ENCODE measurements at regions of chr6 and their contacts with region 1.

Region 1: GRCh38 chr6:107114213-107114905 is 956 bp downstream of the BEND3 start:
- DNase-seq: peak; percentile 69
- H3K4me3 Mint-ChIP-seq: peak overlapping the region; percentile 79
- H3K27ac Mint-ChIP-seq: peak overlapping the region; percentile 77
- H3K4me1 Mint-ChIP-seq: peaks cover 21% of the 10 kb centered on the region
- H3K27me3 Mint-ChIP-seq: peaks cover 5% of the 10 kb centered on the region

Region 2: DNA sequence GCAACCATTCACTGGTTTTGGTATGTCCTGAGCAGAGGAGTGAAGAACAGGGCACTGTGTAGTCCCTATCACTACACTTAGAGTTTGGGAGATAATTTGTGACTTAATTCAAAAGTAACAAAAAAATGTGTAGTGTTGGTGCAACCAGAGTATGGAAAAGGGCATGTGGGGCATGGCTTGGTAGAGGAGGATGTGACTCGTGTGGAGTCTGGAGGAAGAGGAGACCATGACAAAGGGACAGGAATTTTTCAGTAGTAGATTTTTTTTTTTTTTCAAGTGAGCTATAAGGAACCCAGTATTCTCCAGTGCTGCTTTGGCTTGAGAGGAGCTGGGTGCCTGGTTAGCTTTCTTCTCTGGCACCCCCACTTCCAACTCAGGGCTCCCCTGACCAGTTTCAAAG is 81.2 kb before region 1 on chr6:
- intact Hi-C with region 1: loop called (anchors 1 kb)
- DNase-seq: no peak
- H3K4me3 Mint-ChIP-seq: no peak overlapping the region
- H3K27ac Mint-ChIP-seq: peak overlapping the region; percentile 81
- H3K4me1 Mint-ChIP-seq: peaks cover 32% of the 10 kb centered on the region
- H3K27me3 Mint-ChIP-seq: no peaks in the 10 kb centered on the region

Region 3: DNA sequence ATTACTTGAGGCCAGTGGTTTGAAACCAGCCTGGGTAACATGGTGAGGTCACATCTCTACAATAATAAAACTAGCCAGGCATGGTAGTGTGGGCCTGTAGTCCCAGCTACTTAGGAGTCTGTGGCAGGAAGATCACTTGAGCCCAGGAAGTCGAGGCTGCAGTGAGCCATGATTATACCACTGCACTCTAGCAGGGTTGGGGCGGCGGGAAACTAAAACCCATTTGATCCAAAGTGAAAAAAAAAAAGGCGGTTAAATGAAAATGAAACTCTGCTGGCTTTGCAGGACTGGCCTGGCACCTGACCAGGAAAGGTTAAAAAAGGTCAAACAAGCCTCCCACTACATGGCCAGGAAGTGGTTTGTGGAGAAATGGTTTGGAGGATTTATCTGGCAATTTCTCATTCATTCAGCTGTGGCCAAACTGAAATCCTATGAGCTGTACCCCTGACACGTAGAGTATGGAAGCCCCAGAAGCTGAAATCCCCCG is 49.7 kb before region 1 on chr6:
- intact Hi-C with region 1: loop called (anchors 1 kb)
- DNase-seq: peak; percentile 38
- H3K4me3 Mint-ChIP-seq: no peak overlapping the region
- H3K27ac Mint-ChIP-seq: peak overlapping the region; percentile 95
- H3K4me1 Mint-ChIP-seq: peaks cover 66% of the 10 kb centered on the region
- H3K27me3 Mint-ChIP-seq: no peaks in the 10 kb centered on the region

Region 4: GRCh38 chr6:107080036-107080435 is 34.3 kb before region 1 on chr6:
- intact Hi-C with region 1: loop called (anchors 5 kb)
- DNase-seq: no peak
- H3K4me3 Mint-ChIP-seq: no peak overlapping the region
- H3K27ac Mint-ChIP-seq: no peak overlapping the region
- H3K4me1 Mint-ChIP-seq: peaks cover 40% of the 10 kb centered on the region
- H3K27me3 Mint-ChIP-seq: no peaks in the 10 kb centered on the region

Region 5: GRCh38 chr6:107154131-107154800 is 39.9 kb after region 1 on chr6:
- intact Hi-C with region 1: no loop called
- DNase-seq: no peak
- H3K4me3 Mint-ChIP-seq: no peak overlapping the region
- H3K27ac Mint-ChIP-seq: no peak overlapping the region
- H3K4me1 Mint-ChIP-seq: no peaks in the 10 kb centered on the region
- H3K27me3 Mint-ChIP-seq: no peaks in the 10 kb centered on the region

Region 6: GRCh38 chr6:107459283-107460082 is 345.1 kb after region 1 on chr6 and contains the start of gene PDSS2:
- intact Hi-C with region 1: loop called (anchors 1 kb)
- DNase-seq: peak; percentile 96
- H3K4me3 Mint-ChIP-seq: peak within 1 kb of the TSS; percentile 95
- H3K27ac Mint-ChIP-seq: peak within 1 kb of the TSS; percentile 88
- H3K4me1 Mint-ChIP-seq: peaks cover 13% of the 10 kb centered on the region
- H3K27me3 Mint-ChIP-seq: peaks cover 2% of the 10 kb centered on the region
- total RNA-seq, gene PDSS2: 13.0 and 14.4 TPM in 2 replicates